B cell (primary cell): ENCODE measurements at regions of chr12 and their contacts with region 1.

Region 1: DNA sequence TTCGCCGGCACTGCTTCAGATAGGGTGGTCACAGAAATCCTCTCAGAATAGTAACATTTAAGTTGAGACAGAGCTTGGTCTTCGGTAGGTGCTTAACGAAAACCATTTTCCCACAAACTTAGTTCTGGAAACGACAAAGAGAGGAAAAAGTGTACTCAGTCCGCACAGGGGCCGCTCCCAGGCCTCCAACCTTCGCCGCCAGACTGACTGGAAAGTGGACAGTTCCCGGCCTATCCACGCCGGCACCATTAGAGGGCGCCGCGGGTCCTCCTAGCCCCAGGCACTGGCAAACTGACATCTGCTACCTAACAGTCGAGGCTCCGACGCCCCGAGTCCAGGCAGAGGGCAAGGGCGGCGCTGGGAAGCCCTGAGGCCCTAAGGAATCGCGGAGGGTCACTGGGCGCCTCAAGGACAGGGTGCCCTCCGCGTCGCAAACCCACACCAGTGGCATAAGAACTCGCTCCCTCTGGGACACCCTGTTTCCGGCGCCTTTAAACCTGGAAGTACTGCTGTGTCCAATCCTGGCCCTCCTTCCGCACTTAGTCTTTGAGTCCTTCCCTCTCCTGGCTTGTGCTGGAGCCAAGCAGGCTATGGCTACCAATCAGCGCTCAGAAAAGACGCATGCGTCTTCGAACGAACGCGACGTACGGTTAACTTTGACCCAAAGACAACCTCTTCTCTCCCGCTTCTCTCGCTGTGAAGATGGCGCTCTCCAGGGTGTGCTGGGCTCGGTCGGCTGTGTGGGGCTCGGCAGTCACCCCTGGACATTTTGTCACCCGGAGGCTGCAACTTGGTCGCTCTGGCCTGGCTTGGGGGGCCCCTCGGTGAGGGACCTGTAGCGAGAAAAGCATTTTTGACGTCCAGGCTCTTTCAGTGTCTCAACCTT is at the start of gene LETMD1:
- DNase-seq: peak; percentile 97
- ATAC-seq: peak; percentile 95
- H3K4me3 ChIP-seq: peak within 1 kb of the TSS; percentile 75 to 91 (median 79)
- H3K4me3 Mint-ChIP-seq: peak within 1 kb of the TSS; percentile 96
- H3K27ac ChIP-seq: peak within 1 kb of the TSS; percentile 81
- H3K27ac Mint-ChIP-seq: peak within 1 kb of the TSS; percentile 95
- H3K4me1 ChIP-seq: peaks cover 18 to 22% of the 10 kb centered on the region in 2 donors
- H3K4me1 Mint-ChIP-seq: peaks cover 29% of the 10 kb centered on the region
- H3K27me3 ChIP-seq: no peaks in the 10 kb centered on the region
- H3K27me3 Mint-ChIP-seq: no peaks in the 10 kb centered on the region
- CTCF ChIP-seq: peak; percentile 97
- total RNA-seq, gene LETMD1: 101 and 105 TPM in 2 replicates

Region 2: DNA sequence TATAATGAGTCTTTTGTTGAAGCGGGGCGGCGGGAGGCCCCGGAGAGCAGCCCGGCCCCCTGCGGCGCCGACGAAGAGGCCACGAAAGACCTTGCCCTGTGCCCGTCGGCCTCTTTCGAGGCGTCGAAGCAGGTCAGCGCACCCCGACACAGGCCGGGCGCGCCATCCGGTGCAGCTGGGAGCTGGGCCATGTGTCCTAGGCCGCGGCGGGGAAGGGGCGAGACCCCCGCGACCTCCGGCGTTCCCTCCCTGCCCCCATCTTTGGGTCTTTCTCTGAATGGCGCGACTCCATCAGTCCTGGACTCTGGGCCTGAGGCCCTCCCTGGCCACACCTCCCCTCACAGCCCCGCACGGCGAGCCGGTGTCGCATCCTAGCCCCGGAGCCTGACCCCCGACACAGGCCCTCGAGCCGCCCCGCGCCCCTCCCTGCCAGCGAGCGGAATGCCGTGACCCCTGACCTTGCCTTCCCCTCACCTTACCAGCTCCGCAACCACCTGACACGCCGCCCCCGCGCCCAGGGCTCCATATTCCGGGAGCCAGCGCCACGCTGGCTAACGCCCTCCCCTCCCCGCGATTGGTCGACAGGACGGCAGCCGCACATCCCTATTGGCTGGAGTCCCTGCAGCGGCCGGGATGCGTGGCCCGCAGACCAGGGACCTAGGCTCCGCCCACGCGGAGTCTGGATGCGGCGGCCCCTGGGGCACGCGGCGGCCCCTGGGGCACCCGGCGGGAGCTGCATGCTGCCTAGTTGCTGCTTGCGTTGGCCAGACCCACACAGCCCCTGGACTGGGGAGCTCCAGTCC is 21.9 kb before region 1 on chr12 and contains the start of gene SLC11A2:
- CTCF ChIA-PET with region 1: interaction called, 5 read pairs
- POLR2A ChIA-PET with region 1: interaction called, 3 read pairs
- intact Hi-C with region 1: loop called (anchors 1 kb)
- DNase-seq: peak; percentile 92
- ATAC-seq: peak; percentile 98
- H3K4me3 ChIP-seq: peak within 1 kb of the TSS; percentile 34 to 97 (median 78)
- H3K4me3 Mint-ChIP-seq: peak within 1 kb of the TSS; percentile 94
- H3K27ac ChIP-seq: peak within 1 kb of the TSS; percentile 71 to 74
- H3K27ac Mint-ChIP-seq: peak within 1 kb of the TSS; percentile 93
- H3K4me1 ChIP-seq: peaks cover 13 to 28% of the 10 kb centered on the region in 2 donors
- H3K4me1 Mint-ChIP-seq: peaks cover 36% of the 10 kb centered on the region
- H3K27me3 ChIP-seq: peaks cover 0 to 3% (median 0%) of the 10 kb centered on the region in 4 experiments
- H3K27me3 Mint-ChIP-seq: peaks cover 4% of the 10 kb centered on the region
- CTCF ChIP-seq: no peak
- total RNA-seq, gene SLC11A2: 42.0 and 45.7 TPM in 2 replicates

Region 3: DNA sequence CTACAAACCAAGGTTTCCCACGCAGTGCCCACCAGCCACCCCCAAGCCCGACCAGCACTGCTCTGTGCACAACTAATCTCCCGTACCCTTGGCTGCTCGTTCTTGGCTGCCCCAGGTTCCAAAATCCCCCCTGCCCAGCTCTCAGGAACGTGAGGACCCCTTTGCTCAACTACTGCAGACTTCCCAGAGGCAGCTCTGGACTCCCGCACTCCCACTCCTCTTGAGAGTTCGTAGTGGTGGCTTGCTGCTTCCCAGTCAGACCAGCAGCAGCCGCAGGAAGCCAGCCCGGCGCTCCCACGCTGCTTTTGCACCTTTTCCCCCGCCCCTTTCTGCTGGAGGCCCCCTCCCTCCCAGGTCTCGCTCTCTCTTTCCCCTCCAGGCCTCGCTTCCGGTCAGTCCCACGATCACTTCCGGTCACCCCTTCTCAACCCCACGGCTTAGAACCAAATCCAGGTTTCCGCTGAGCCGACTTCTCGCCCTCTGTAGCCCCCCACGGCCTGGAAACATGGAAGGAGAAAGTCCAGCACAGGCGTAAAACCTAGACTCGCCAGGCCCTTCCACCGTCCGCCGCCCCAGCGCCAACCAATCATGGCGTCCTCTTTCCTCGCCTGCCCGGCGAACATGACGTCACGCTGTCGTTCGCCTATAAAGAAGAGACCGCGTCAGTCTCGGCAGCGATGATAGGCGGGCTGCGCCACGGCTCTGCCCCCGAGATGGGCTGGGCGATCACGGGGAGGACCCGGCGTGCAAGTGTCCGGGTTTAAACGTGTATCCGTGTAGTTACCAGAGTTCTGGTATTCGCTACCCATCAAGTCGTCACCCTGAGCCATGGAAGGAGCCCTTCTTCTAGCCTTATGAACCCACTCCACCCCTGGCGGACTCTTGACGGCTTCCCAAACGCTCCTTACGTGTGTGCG is 124.9 kb after region 1 on chr12 and contains the start of gene TFCP2:
- CTCF ChIA-PET with region 1: no interaction called
- POLR2A ChIA-PET with region 1: no interaction called
- intact Hi-C with region 1: loop called (anchors 1 kb)
- DNase-seq: peak; percentile 97
- ATAC-seq: peak; percentile 99
- H3K4me3 ChIP-seq: peak within 1 kb of the TSS; percentile 75 to 100 (median 88)
- H3K4me3 Mint-ChIP-seq: peak within 1 kb of the TSS; percentile 83
- H3K27ac ChIP-seq: peak within 1 kb of the TSS; percentile 85 to 96
- H3K27ac Mint-ChIP-seq: peak within 1 kb of the TSS; percentile 77
- H3K4me1 ChIP-seq: peaks cover 16 to 19% of the 10 kb centered on the region in 2 donors
- H3K4me1 Mint-ChIP-seq: peaks cover 15% of the 10 kb centered on the region
- H3K27me3 ChIP-seq: no peaks in the 10 kb centered on the region
- H3K27me3 Mint-ChIP-seq: no peaks in the 10 kb centered on the region
- CTCF ChIP-seq: no peak
- total RNA-seq, gene TFCP2: 37.0 and 38.8 TPM in 2 replicates

Region 4: GRCh38 chr12:51293696-51294095 is 245.8 kb after region 1 on chr12:
- CTCF ChIA-PET with region 1: no interaction called
- POLR2A ChIA-PET with region 1: no interaction called
- intact Hi-C with region 1: loop called (anchors 1 kb)
- DNase-seq: no peak
- ATAC-seq: no peak
- H3K4me3 ChIP-seq: no peak overlapping the region
- H3K4me3 Mint-ChIP-seq: no peak overlapping the region
- H3K27ac ChIP-seq: no peak overlapping the region
- H3K27ac Mint-ChIP-seq: no peak overlapping the region
- H3K4me1 ChIP-seq: peaks cover 0 to 8% of the 10 kb centered on the region in 2 donors
- H3K4me1 Mint-ChIP-seq: peaks cover 11% of the 10 kb centered on the region
- H3K27me3 ChIP-seq: no peaks in the 10 kb centered on the region
- H3K27me3 Mint-ChIP-seq: no peaks in the 10 kb centered on the region
- CTCF ChIP-seq: no peak

Region 5: GRCh38 chr12:51531978-51532497 is 484.1 kb after region 1 on chr12:
- CTCF ChIA-PET with region 1: no interaction called
- POLR2A ChIA-PET with region 1: no interaction called
- intact Hi-C with region 1: loop called (anchors 5 kb)
- DNase-seq: peak; percentile 84
- ATAC-seq: peak; percentile 98
- H3K4me3 ChIP-seq: no peak overlapping the region
- H3K4me3 Mint-ChIP-seq: no peak overlapping the region
- H3K27ac ChIP-seq: no peak overlapping the region
- H3K27ac Mint-ChIP-seq: no peak overlapping the region
- H3K4me1 ChIP-seq: peaks cover 7 to 8% of the 10 kb centered on the region in 2 donors
- H3K4me1 Mint-ChIP-seq: peaks cover 9% of the 10 kb centered on the region
- H3K27me3 ChIP-seq: peaks cover 0 to 13% (median 0%) of the 10 kb centered on the region in 4 experiments
- H3K27me3 Mint-ChIP-seq: peaks cover 30% of the 10 kb centered on the region
- CTCF ChIP-seq: peak; percentile 92